A673 (cell line): ENCODE measurements at regions of chr1 and their contacts with region 1.

Region 1: GRCh38 chr1:24830680-24831272 is 85.5 kb downstream of the CLIC4 start:
- DNase-seq: peak; percentile 82
- H3K4me3 ChIP-seq: no peak overlapping the region
- H3K27ac ChIP-seq: no peak overlapping the region
- H3K4me1 ChIP-seq: peaks cover 47% of the 10 kb centered on the region
- H3K27me3 ChIP-seq: no peaks in the 10 kb centered on the region
- CTCF ChIP-seq: peak; percentile 81

Region 2: DNA sequence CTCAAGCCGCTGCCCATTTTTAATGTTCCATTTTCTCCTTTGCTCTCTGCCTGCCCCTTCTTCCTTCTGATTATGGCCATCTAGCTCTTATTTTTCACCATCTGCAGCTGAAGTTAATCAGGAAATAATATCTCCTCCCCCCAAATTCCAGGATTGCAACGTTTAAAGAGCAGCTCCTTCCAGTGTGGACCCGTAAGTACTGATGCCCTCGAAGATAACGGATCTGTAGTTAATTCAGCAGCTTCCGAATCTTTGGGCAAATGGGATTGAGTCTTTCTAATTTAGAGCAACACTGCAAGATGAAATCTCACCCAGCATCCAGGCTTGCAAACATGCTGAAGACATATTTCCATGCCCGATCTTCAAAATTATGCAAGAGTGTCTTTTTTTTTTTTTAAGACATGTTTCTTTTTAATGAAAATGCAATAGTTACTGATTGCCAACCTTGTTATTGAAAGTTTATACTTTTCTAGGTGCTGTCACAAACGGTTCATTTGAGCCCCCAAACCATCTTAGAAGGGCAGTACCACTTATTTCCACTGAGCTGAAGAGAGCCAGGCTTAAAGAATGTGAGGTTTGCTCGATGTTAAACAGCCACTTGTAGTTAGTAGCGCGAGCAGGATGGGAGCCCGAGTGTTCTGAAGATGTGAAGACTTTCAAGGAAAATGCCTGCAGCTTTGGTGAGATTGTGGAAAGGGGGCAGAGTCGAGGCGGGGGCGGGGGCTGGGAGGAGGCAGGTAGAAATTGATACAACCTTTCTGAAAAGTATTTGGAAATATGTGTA is 339.0 kb before region 1 on chr1:
- CTCF ChIA-PET with region 1: interaction called, 10 read pairs
- POLR2A ChIA-PET with region 1: interaction called, 3 read pairs
- intact Hi-C with region 1: no loop called
- DNase-seq: peak; percentile 22
- H3K4me3 ChIP-seq: no peak overlapping the region
- H3K27ac ChIP-seq: no peak overlapping the region
- H3K4me1 ChIP-seq: no peaks in the 10 kb centered on the region
- H3K27me3 ChIP-seq: no peaks in the 10 kb centered on the region
- CTCF ChIP-seq: no peak

Region 3: GRCh38 chr1:25743826-25744581 is 913.2 kb after region 1 on chr1:
- CTCF ChIA-PET with region 1: no interaction called
- POLR2A ChIA-PET with region 1: no interaction called
- intact Hi-C with region 1: no loop called
- DNase-seq: peak; percentile 25
- H3K4me3 ChIP-seq: no peak overlapping the region
- H3K27ac ChIP-seq: no peak overlapping the region
- H3K4me1 ChIP-seq: no peaks in the 10 kb centered on the region
- H3K27me3 ChIP-seq: no peaks in the 10 kb centered on the region
- CTCF ChIP-seq: peak; percentile 33